ENCODE measurements at regions of chr6 and their contacts with region 1.

Region 1: DNA sequence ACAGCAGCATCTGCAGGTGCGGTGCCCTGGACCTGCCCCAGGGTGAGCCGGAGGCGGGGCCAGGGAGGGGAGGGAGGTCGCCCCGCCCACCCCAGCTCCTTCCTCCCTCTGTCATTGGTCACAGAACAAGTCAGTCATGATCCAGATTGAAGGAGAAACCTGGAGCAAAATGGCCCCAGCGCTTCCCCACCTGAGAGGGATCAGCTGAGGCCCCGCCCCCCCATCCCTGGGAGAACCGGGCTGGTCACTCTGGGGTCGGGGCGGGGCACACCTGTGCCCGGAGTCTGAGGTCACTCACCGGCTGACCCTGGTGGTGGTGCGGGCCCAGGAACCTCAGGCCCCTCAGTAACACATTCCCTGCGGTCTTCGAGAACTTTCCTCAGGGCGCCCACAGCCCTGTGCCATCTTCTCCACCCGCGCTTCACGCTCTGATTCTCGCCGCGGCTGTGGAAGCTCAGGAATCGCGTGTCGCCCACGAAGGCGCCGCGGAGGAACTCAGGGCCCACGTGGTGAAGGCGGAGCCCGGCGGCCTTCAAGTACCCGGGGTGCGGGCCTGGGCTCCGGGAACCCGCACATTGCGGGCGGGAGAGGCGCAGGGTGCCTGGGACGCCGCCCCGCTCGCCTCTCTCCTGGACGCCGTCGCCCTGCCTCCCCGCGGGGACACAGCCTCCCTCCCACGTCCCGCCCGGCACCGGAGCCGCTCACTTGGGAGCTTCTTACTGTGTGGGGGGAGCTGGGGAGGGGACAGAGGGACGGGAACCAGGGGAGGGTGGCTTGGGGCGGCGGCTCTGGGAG is 36.4 kb upstream of the HLA-C start:
- DNase-seq: peak; percentile 14 to 33 (median 17)
- H3K4me3 ChIP-seq: peak overlapping the region; percentile 8 to 65 (median 35)
- H3K4me3 Mint-ChIP-seq: peak overlapping the region; percentile 70 to 86
- H3K27ac ChIP-seq: no peak overlapping the region
- H3K27ac Mint-ChIP-seq: no peak overlapping the region
- H3K4me1 ChIP-seq: peaks cover 9 to 10% of the 10 kb centered on the region in 2 donors
- H3K4me1 Mint-ChIP-seq: peaks cover 14% of the 10 kb centered on the region
- H3K27me3 ChIP-seq: peaks cover 25 to 37% of the 10 kb centered on the region in 2 donors
- H3K27me3 Mint-ChIP-seq: peaks cover 17 to 68% (median 60%) of the 10 kb centered on the region in 3 donors
- CTCF ChIP-seq: no peak

Region 2: DNA sequence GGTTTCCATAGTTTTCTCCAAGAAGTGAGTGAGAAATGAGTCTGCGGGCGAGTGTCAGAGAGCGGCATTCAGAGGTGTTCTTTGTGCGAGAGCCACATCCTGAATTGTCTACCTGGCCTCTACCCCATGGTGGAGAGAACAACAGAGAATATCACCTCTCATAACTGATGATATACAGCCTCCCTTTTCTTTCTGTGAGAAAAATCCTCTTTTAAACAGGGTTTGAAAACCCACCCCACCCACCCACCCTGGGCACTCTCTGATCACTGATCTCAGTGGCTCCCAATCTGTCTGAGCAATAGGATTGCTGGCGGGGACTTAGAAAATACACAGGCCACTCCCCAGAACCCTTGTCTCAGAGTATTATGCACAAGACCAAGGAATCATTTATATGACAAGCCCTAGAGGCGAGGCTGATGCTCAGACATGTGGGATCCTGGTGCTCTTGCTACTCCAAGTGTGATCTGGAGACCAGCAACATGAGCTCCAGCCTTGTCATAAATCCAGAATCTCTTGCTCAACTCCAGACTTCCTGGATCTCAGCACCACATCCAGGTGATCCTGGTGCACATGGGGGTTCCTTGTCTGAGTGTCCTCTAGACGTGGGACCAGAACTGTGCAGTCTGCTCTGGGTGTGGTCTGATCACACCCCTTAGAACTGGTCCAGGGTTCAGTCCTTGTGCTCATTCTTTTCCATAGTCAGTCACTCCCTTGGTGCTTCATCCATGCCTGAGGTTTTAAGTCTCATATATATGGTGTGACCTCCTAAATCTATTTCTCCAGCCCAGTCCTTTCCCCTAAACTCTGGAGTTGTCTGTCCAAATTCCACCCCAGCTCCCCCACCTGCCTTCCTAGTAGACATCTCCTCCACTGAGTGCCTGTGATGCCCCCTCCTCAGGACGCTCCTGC is 43.4 kb after region 1 on chr6:
- intact Hi-C with region 1: loop called in 1 of 2 experiments (anchors 5 kb)
- DNase-seq: peak in 1 of 3 donors; percentile 38
- H3K4me3 ChIP-seq: no peak overlapping the region
- H3K4me3 Mint-ChIP-seq: peak overlapping the region in 1 of 2 donors; percentile 49
- H3K27ac ChIP-seq: no peak overlapping the region
- H3K27ac Mint-ChIP-seq: peak overlapping the region; percentile 22 to 85 (median 77)
- H3K4me1 ChIP-seq: peaks cover 25 to 30% of the 10 kb centered on the region in 2 donors
- H3K4me1 Mint-ChIP-seq: peaks cover 39% of the 10 kb centered on the region
- H3K27me3 ChIP-seq: no peaks in the 10 kb centered on the region
- H3K27me3 Mint-ChIP-seq: peaks cover 2 to 18% (median 2%) of the 10 kb centered on the region in 3 donors
- CTCF ChIP-seq: no peak

Measured in CD14-positive monocyte (primary cell).